A549 (cell line): ENCODE measurements at regions of chr5 and their contacts with region 1.

Region 1: DNA sequence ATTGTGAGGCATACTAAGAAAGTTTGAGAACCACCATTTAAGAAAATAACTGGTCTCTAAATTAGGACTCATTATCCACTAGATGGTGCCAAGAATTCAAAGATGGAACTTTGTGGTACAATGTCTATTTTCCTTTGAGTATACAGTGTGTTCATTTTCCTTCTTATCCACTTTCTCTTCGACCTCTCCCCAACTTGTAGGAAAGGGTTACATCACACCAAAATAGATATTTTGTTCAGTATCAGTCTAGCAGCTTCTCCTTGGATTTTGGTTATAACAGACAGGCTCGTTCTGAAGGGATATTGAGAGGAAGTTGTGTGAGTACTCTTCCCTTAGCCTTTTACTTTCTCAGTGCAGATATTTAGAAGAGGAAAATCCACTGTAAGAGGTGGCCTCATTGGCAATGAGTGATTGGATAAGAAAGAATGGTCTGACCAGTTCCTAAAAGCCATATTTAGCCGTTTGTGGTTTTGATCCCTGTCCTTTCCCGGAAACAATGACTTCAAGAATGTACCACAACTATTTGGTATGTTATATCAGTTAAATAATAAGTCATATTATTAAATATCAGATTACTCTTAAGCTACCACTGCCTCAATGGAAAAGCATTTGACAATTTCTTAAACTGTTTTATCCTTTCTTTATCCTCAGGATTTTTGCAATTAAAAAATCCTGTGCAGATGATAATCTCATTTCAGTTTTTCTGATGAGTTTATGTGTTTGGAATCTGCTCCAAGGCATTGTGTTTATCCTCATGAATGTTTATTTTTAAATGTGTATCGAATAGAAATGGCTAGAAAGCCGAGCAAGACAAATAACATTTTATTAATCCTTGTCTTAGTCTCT is 69.0 kb upstream of the GRAMD2B start:
- DNase-seq: peak; percentile 43 to 45
- ATAC-seq: peak; percentile 72 to 85; a peak in 5 of 6 replicates
- H3K4me3 ChIP-seq: no peak overlapping the region
- H3K27ac ChIP-seq: peak overlapping the region in 1 of 2 experiments; percentile 19; a peak in 1 of 6 replicates
- H3K4me1 ChIP-seq: no peaks in the 10 kb centered on the region
- CTCF ChIP-seq: peak; percentile 77
- EP300 ChIP-seq: no peak
- POLR2A ChIP-seq: no peak
- RAD21 ChIP-seq: peak; percentile 84

Region 2: GRCh38 chr5:126339215-126339805 is 14.9 kb before region 1 on chr5:
- CTCF ChIA-PET with region 1: interaction called, 48 read pairs
- POLR2A ChIA-PET with region 1: no interaction called
- DNase-seq: peak; percentile 38 to 65
- ATAC-seq: peak; percentile 57 to 82; a peak in 3 of 6 replicates
- H3K4me3 ChIP-seq: no peak overlapping the region
- H3K27ac ChIP-seq: no peak overlapping the region
- H3K4me1 ChIP-seq: no peaks in the 10 kb centered on the region
- CTCF ChIP-seq: peak; percentile 90
- EP300 ChIP-seq: no peak
- POLR2A ChIP-seq: no peak
- RAD21 ChIP-seq: peak; percentile 82 to 87

Region 3: GRCh38 chr5:126389179-126389578 is 34.9 kb after region 1 on chr5:
- CTCF ChIA-PET with region 1: no interaction called
- POLR2A ChIA-PET with region 1: no interaction called
- DNase-seq: no peak
- ATAC-seq: no peak
- H3K4me3 ChIP-seq: no peak overlapping the region
- H3K27ac ChIP-seq: no peak overlapping the region
- H3K4me1 ChIP-seq: no peaks in the 10 kb centered on the region
- CTCF ChIP-seq: no peak
- EP300 ChIP-seq: no peak
- POLR2A ChIP-seq: no peak
- RAD21 ChIP-seq: no peak

Region 4: GRCh38 chr5:126414874-126415502 is 60.8 kb after region 1 on chr5:
- CTCF ChIA-PET with region 1: no interaction called
- POLR2A ChIA-PET with region 1: no interaction called
- DNase-seq: no peak
- ATAC-seq: no peak
- H3K4me3 ChIP-seq: no peak overlapping the region
- H3K27ac ChIP-seq: no peak overlapping the region
- H3K4me1 ChIP-seq: no peaks in the 10 kb centered on the region
- CTCF ChIP-seq: no peak
- EP300 ChIP-seq: no peak
- POLR2A ChIP-seq: no peak
- RAD21 ChIP-seq: no peak

Region 5: DNA sequence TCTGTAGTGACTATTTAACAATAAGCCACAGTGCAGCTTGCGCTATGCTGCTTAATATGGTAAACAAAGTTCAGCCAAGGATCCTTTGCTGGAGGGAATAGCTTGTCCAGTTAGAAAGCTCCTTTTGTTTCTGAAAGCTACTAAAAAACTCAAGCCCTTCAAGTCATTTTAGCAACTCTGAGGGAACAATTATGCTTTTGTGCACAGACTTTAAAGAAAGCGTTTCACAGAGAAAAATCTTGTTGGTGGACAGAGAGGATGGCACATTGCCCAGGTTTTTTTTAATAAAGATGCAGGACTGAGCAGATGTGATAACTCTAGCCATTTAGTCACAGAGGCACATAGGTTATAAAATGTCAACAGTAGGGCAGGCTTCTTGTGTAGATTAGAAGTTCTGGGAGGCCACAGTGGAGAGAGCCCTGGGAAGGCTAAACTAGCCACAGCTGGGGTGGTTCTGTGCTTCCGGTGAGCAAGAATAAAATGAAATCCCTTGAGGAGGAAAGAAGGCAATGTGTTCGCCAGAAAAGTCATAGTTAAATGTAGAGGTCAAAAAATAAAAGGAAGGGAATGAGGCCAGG is 177.4 kb after region 1 on chr5:
- CTCF ChIA-PET with region 1: interaction called, 38 read pairs
- POLR2A ChIA-PET with region 1: no interaction called
- DNase-seq: no peak
- ATAC-seq: no peak
- H3K4me3 ChIP-seq: no peak overlapping the region
- H3K27ac ChIP-seq: no peak overlapping the region
- H3K4me1 ChIP-seq: no peaks in the 10 kb centered on the region
- CTCF ChIP-seq: no peak
- EP300 ChIP-seq: no peak
- POLR2A ChIP-seq: no peak
- RAD21 ChIP-seq: no peak

Region 6: GRCh38 chr5:126536874-126537273 is 182.6 kb after region 1 on chr5:
- CTCF ChIA-PET with region 1: interaction called, 38 read pairs
- POLR2A ChIA-PET with region 1: no interaction called
- DNase-seq: no peak
- ATAC-seq: no peak
- H3K4me3 ChIP-seq: no peak overlapping the region
- H3K27ac ChIP-seq: no peak overlapping the region
- H3K4me1 ChIP-seq: no peaks in the 10 kb centered on the region
- CTCF ChIP-seq: no peak
- EP300 ChIP-seq: no peak
- POLR2A ChIP-seq: no peak
- RAD21 ChIP-seq: no peak

Region 7: DNA sequence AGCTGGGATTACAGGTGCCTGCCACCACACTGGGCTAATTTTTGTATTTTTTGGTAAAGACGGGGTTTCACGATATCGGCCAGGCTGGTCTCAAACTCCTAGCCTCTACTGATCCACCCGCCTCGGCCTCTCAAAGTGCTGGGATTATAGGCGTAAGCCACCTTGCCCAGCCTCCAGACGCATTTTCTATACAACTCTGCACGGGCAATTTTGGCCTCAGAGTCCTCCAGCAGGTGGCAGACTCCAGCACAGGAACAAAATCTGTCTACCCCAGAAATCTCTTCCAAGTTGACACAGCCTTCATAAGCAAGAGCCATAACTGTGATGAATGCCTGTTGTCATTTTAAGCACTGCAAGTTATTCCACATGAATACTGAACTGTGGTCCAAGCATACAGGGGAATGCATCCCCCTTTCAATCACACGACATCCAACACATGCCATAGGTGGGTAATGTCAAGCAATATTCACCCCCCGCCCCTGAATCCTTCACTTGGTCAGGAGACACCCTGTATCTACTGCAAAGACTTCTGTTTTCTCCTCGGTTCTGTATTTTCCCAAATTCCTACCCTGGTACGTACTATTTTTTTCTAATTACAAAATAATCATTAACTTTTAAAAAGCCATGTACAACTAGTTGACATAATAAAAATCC is 190.0 kb after region 1 on chr5:
- CTCF ChIA-PET with region 1: interaction called, 21 read pairs
- POLR2A ChIA-PET with region 1: interaction called, 4 read pairs
- DNase-seq: peak; percentile 46 to 58
- ATAC-seq: peak; percentile 83 to 88
- H3K4me3 ChIP-seq: no peak overlapping the region
- H3K27ac ChIP-seq: no peak overlapping the region
- H3K4me1 ChIP-seq: no peaks in the 10 kb centered on the region
- CTCF ChIP-seq: peak; percentile 54
- EP300 ChIP-seq: no peak
- POLR2A ChIP-seq: no peak
- RAD21 ChIP-seq: peak; percentile 35 to 49; a peak in 3 of 5 replicates

Region 8: DNA sequence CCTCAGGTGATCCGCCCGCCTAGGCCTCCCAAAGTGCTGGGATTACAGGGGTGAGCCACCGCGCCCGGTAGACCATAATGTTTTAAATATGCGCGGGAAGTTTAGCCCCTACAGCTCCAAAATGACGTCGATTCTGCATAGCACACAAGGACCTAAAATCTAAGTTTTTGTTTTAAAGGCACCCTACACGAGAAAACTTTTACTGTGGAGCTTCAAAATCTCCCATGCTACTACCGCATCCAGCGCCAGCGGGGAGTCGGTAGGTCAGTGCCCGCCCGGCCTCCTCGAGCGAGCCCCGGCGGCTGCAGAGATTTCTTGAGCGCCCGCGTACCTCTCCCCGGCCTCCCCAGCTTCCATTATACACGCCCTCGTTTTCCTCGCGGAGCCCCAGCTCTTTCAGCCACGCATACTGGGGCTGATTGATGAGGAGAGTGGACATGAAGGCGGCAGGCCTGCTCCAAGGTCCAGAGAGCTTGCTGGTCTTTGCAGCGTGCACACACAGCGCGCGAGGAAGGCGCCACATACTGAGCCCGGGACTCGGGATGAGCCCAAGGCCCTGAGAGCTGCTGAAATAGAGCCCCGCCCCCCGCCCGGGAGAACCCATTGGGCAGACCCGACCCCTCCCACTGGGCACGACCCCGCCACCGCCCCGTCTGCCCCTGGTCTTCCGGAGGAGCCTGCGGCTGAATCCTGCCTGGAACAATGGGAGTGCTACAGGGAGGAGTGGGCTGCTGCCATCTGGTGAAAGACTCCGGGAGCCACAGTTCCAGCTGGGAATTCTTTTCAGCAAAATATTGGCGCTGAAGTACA is 240.6 kb after region 1 on chr5 and contains the start of gene ALDH7A1:
- CTCF ChIA-PET with region 1: interaction called, 24 read pairs
- POLR2A ChIA-PET with region 1: no interaction called
- DNase-seq: peak; percentile 96 to 97
- ATAC-seq: peak; percentile 98
- H3K4me3 ChIP-seq: peak within 1 kb of the TSS; percentile 54
- H3K27ac ChIP-seq: peak within 1 kb of the TSS; percentile 77 to 88
- H3K4me1 ChIP-seq: peaks cover 20% of the 10 kb centered on the region
- CTCF ChIP-seq: peak; percentile 68
- EP300 ChIP-seq: no peak
- POLR2A ChIP-seq: peak; percentile 99
- RAD21 ChIP-seq: peak; percentile 52 to 62
- polyA plus RNA-seq, gene ALDH7A1: 78.3 and 99.2 TPM in 2 replicates

Region 9: GRCh38 chr5:126600631-126601511 is 246.6 kb after region 1 on chr5 and contains the start of gene PHAX:
- CTCF ChIA-PET with region 1: interaction called, 24 read pairs
- POLR2A ChIA-PET with region 1: interaction called, 3 read pairs
- DNase-seq: peak; percentile 77 to 83
- ATAC-seq: peak; percentile 98 to 99
- H3K4me3 ChIP-seq: peak within 1 kb of the TSS; percentile 94
- H3K27ac ChIP-seq: peak within 1 kb of the TSS; percentile 96 to 98
- H3K4me1 ChIP-seq: peaks cover 18% of the 10 kb centered on the region; the same call in 2 of the 3 replicates
- CTCF ChIP-seq: peak; percentile 79
- EP300 ChIP-seq: no peak
- POLR2A ChIP-seq: peak; percentile 80
- RAD21 ChIP-seq: peak in 1 of 2 experiments; percentile 36; a peak in 3 of 5 replicates
- polyA plus RNA-seq, gene PHAX: 43.3 and 74.8 TPM in 2 replicates